ENCODE measurements at regions of chr17 and their contacts with region 1.

Region 1: GRCh38 chr17:39754161-39754951 is 16.6 kb downstream of the GRB7 start:
- DNase-seq: peak; percentile 97
- H3K4me3 Mint-ChIP-seq: peak overlapping the region; percentile 81
- H3K27ac Mint-ChIP-seq: peak overlapping the region; percentile 53
- H3K4me1 Mint-ChIP-seq: peaks cover 60% of the 10 kb centered on the region
- H3K27me3 Mint-ChIP-seq: no peaks in the 10 kb centered on the region

Region 2: GRCh38 chr17:39621523-39622379 is 132.6 kb before region 1 on chr17:
- intact Hi-C with region 1: loop called (anchors 1 kb)
- DNase-seq: peak; percentile 86
- H3K4me3 Mint-ChIP-seq: peak overlapping the region; percentile 68
- H3K27ac Mint-ChIP-seq: peak overlapping the region; percentile 62
- H3K4me1 Mint-ChIP-seq: peaks cover 27% of the 10 kb centered on the region
- H3K27me3 Mint-ChIP-seq: peaks cover 62% of the 10 kb centered on the region

Region 3: GRCh38 chr17:39687811-39688518 is 66.4 kb before region 1 on chr17 and contains the start of gene PGAP3:
- intact Hi-C with region 1: loop called (anchors 1 kb)
- DNase-seq: peak; percentile 73
- H3K4me3 Mint-ChIP-seq: peak within 1 kb of the TSS; percentile 94
- H3K27ac Mint-ChIP-seq: peak within 1 kb of the TSS; percentile 69
- H3K4me1 Mint-ChIP-seq: peaks cover 22% of the 10 kb centered on the region
- H3K27me3 Mint-ChIP-seq: no peaks in the 10 kb centered on the region
- total RNA-seq, gene PGAP3: 14.4 and 16.9 TPM in 2 replicates

Region 4: GRCh38 chr17:39738931-39739884 is 15.1 kb before region 1 on chr17:
- intact Hi-C with region 1: loop called (anchors 1 kb)
- DNase-seq: no peak
- H3K4me3 Mint-ChIP-seq: peak overlapping the region; percentile 60
- H3K27ac Mint-ChIP-seq: peak overlapping the region; percentile 42
- H3K4me1 Mint-ChIP-seq: peaks cover 33% of the 10 kb centered on the region
- H3K27me3 Mint-ChIP-seq: peaks cover 17% of the 10 kb centered on the region

Region 5: GRCh38 chr17:39794249-39794970 is 40.1 kb after region 1 on chr17:
- intact Hi-C with region 1: loop called (anchors 1 kb)
- DNase-seq: no peak
- H3K4me3 Mint-ChIP-seq: peak overlapping the region; percentile 49
- H3K27ac Mint-ChIP-seq: peak overlapping the region; percentile 73
- H3K4me1 Mint-ChIP-seq: peaks cover 64% of the 10 kb centered on the region
- H3K27me3 Mint-ChIP-seq: no peaks in the 10 kb centered on the region